Naive thymus-derived CD4-positive, alpha-beta T cell (primary cell): ENCODE measurements at regions of chr5 and their contacts with region 1.

Region 1: DNA sequence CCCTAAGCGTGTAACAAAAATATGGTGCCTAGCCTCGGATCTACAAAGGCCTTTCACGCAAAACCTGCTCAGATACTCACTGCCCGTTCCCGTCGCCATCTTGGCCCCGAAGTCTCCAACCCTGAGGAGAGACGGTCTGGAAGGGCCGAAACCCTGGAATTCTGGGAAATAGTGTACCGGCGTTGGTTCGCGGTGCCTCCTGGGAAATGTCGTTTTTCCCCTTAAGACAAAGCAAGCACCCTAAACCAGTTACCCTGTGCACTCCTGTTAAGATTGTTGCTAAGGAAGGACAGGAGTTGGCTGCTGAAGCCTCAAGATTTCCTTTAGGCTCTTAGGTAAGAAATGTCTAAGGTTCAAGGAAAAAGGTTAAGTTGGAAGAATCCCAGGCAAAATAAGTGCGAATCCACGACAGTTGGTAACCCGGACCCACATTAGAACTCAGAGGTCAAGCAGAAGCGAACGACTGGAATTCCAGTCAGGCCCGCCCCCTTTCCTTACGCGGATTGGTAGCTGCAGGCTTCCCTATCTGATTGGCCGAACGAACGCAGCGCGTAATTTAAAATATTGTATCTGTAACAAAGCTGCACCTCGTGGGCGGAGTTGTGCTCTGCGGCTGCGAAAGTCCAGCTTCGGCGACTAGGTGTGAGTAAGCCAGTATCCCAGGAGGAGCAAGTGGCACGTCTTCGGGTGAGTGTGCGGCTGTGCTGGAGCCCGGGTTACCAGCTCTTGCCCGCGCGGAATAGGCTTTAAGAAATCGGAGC is at the starts of genes BRD8 and KIF20A:
- DNase-seq: peak; percentile 62 to 89 (median 84)
- ATAC-seq: peak; percentile 92
- H3K4me3 ChIP-seq: peak within 1 kb of the TSS; percentile 85
- H3K4me3 Mint-ChIP-seq: peak within 1 kb of the TSS in 2 of 10 donors; percentile 23 to 51
- H3K27ac ChIP-seq: peak within 1 kb of the TSS; percentile 74
- H3K27ac Mint-ChIP-seq: peak within 1 kb of the TSS in 2 of 9 donors; percentile 38 to 60
- H3K4me1 ChIP-seq: peaks cover 10 to 15% of the 10 kb centered on the region in 2 donors
- H3K4me1 Mint-ChIP-seq: peaks cover 0 to 45% (median 17%) of the 10 kb centered on the region in 7 donors
- H3K27me3 ChIP-seq: no peaks in the 10 kb centered on the region
- H3K27me3 Mint-ChIP-seq: no peaks in the 10 kb centered on the region
- total RNA-seq, gene BRD8: 24.7 to 81.9 (median 66.1) TPM
- total RNA-seq, gene KIF20A: 0.29 to 34.1 TPM in 2 of 5 experiments, not detected in the others

Region 2: GRCh38 chr5:137754126-137754960 is 424.4 kb before region 1 on chr5 and contains the start of gene HNRNPA0:
- CTCF ChIA-PET with region 1: no interaction called
- POLR2A ChIA-PET with region 1: no interaction called
- intact Hi-C with region 1: loop called (anchors 1 to 2 kb)
- DNase-seq: peak; percentile 94 to 99 (median 98)
- ATAC-seq: peak; percentile 90
- H3K4me3 ChIP-seq: peak within 1 kb of the TSS; percentile 98
- H3K4me3 Mint-ChIP-seq: peak within 1 kb of the TSS; percentile 85 to 100 (median 98)
- H3K27ac ChIP-seq: peak within 1 kb of the TSS; percentile 98
- H3K27ac Mint-ChIP-seq: peak within 1 kb of the TSS; percentile 99 to 100 (median 100)
- H3K4me1 ChIP-seq: peaks cover 17 to 20% of the 10 kb centered on the region in 2 donors
- H3K4me1 Mint-ChIP-seq: peaks cover 21 to 43% (median 31%) of the 10 kb centered on the region in 7 donors
- H3K27me3 ChIP-seq: no peaks in the 10 kb centered on the region
- H3K27me3 Mint-ChIP-seq: peaks cover 0 to 2% (median 0%) of the 10 kb centered on the region in 5 donors
- total RNA-seq, gene HNRNPA0: 30.0 to 40.2 (median 30.7) TPM

Region 3: GRCh38 chr5:138282920-138283742 is 104.4 kb after region 1 on chr5:
- CTCF ChIA-PET with region 1: no interaction called
- POLR2A ChIA-PET with region 1: no interaction called
- intact Hi-C with region 1: loop called in 1 of 2 experiments (anchors 1 kb)
- DNase-seq: no peak
- ATAC-seq: peak; percentile 36
- H3K4me3 ChIP-seq: no peak overlapping the region
- H3K4me3 Mint-ChIP-seq: no peak overlapping the region
- H3K27ac ChIP-seq: no peak overlapping the region
- H3K27ac Mint-ChIP-seq: no peak overlapping the region
- H3K4me1 ChIP-seq: no peaks in the 10 kb centered on the region
- H3K4me1 Mint-ChIP-seq: no peaks in the 10 kb centered on the region
- H3K27me3 ChIP-seq: no peaks in the 10 kb centered on the region
- H3K27me3 Mint-ChIP-seq: no peaks in the 10 kb centered on the region

Region 4: DNA sequence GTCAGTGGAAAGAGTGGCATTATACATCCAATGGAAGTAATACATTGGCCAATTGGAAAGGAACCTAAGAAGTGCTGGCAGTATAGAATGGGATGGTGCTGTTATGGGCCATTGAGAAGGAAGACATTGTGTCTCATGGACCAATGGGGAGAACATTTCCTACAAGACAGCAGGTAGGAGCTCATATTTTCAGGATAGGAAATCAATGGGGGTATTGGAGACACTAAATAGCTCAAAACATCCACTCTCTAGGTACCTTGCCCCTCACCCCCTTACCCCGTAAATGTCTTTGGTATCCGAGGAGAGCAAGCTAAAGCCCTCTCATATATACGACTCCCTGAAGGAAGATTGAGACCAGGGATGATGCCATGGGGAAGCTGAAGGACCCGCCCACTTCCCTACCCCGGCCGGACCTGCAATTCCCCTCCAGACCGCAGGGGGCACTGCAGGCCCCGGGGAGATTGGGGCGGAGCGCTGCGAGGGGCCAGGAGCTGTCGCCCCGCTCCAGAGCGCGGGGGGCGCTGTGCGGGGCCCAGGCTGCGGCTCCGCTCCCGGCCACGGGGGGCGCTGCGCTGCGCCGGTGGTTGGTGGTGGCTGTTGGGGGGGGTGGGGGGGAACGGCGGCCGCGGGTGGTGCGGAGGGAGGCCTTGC is 173.5 kb after region 1 on chr5 and contains the start of gene KDM3B:
- CTCF ChIA-PET with region 1: interaction called, 5 read pairs
- POLR2A ChIA-PET with region 1: interaction called, 3 read pairs
- intact Hi-C with region 1: loop called (anchors 1 kb)
- DNase-seq: peak; percentile 82 to 100 (median 96)
- ATAC-seq: peak; percentile 96
- H3K4me3 ChIP-seq: peak within 1 kb of the TSS; percentile 93
- H3K4me3 Mint-ChIP-seq: peak within 1 kb of the TSS; percentile 88 to 98 (median 96)
- H3K27ac ChIP-seq: peak within 1 kb of the TSS; percentile 91
- H3K27ac Mint-ChIP-seq: peak within 1 kb of the TSS; percentile 90 to 98 (median 96)
- H3K4me1 ChIP-seq: peaks cover 18 to 32% of the 10 kb centered on the region in 2 donors
- H3K4me1 Mint-ChIP-seq: peaks cover 30 to 54% (median 48%) of the 10 kb centered on the region in 7 donors
- H3K27me3 ChIP-seq: no peaks in the 10 kb centered on the region
- H3K27me3 Mint-ChIP-seq: no peaks in the 10 kb centered on the region
- total RNA-seq, gene KDM3B: 67.7 to 90.2 (median 82.8) TPM

Region 5: GRCh38 chr5:138464008-138464387 is 285.3 kb after region 1 on chr5:
- CTCF ChIA-PET with region 1: interaction called, 3 read pairs
- POLR2A ChIA-PET with region 1: no interaction called
- intact Hi-C with region 1: loop called in 1 of 2 experiments (anchors 1 kb)
- DNase-seq: peak; percentile 90 to 97 (median 94)
- ATAC-seq: peak; percentile 71
- H3K4me3 ChIP-seq: peak overlapping the region; percentile 95
- H3K4me3 Mint-ChIP-seq: peak overlapping the region; percentile 78 to 93 (median 89)
- H3K27ac ChIP-seq: peak overlapping the region; percentile 91
- H3K27ac Mint-ChIP-seq: peak overlapping the region; percentile 76 to 97 (median 91)
- H3K4me1 ChIP-seq: peaks cover 31 to 43% of the 10 kb centered on the region in 2 donors
- H3K4me1 Mint-ChIP-seq: peaks cover 36 to 54% (median 50%) of the 10 kb centered on the region in 7 donors
- H3K27me3 ChIP-seq: no peaks in the 10 kb centered on the region
- H3K27me3 Mint-ChIP-seq: peaks cover 0 to 20% (median 0%) of the 10 kb centered on the region in 5 donors

Region 6: GRCh38 chr5:139262742-139263445 is 1084.2 kb after region 1 on chr5:
- CTCF ChIA-PET with region 1: no interaction called
- POLR2A ChIA-PET with region 1: no interaction called
- intact Hi-C with region 1: loop called in 1 of 2 experiments (anchors 2 kb)
- DNase-seq: peak; percentile 28 to 76 (median 62)
- ATAC-seq: peak; percentile 98
- H3K4me3 ChIP-seq: no peak overlapping the region
- H3K4me3 Mint-ChIP-seq: no peak overlapping the region
- H3K27ac ChIP-seq: no peak overlapping the region
- H3K27ac Mint-ChIP-seq: no peak overlapping the region
- H3K4me1 ChIP-seq: no peaks in the 10 kb centered on the region
- H3K4me1 Mint-ChIP-seq: peaks cover 4 to 11% (median 6%) of the 10 kb centered on the region in 7 donors
- H3K27me3 ChIP-seq: no peaks in the 10 kb centered on the region
- H3K27me3 Mint-ChIP-seq: peaks cover 0 to 37% (median 14%) of the 10 kb centered on the region in 5 donors